ENCODE measurements at regions of chr5 and their contacts with region 1.

Region 1: DNA sequence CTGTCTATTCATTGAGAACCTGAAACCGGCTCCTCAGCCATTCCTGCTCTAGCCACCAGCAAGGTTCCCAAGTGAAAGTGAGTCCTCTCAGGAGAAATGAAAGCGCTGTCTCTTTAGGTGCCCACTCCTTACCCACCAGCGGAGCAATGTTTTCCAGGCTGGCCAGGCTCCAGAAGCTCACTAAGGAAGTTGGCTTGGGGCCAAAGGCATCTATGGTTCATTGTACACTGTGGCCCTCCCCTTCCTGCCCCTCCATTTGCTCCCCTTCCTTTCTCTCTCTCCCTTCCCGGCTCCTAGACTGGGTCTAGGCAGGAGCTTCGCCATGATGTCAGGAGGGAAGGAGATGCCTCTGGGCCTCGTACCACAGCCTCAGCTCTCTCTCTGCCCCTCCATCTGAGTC is 1.1 kb upstream of the GABRP start:
- DNase-seq: no peak
- ATAC-seq: no peak
- H3K4me3 ChIP-seq: no peak overlapping the region
- H3K27ac ChIP-seq: no peak overlapping the region
- H3K4me1 ChIP-seq: no peaks in the 10 kb centered on the region
- H3K27me3 ChIP-seq: no peaks in the 10 kb centered on the region
- CTCF ChIP-seq: no peak

Region 2: GRCh38 chr5:170638454-170639220 is 143.8 kb before region 1 on chr5:
- intact Hi-C with region 1: loop called in 1 of 2 experiments (anchors 10 kb)
- DNase-seq: peak; percentile 43 to 64
- ATAC-seq: peak in 1 of 4 donors; percentile 43
- H3K4me3 ChIP-seq: no peak overlapping the region
- H3K27ac ChIP-seq: no peak overlapping the region
- H3K4me1 ChIP-seq: no peaks in the 10 kb centered on the region
- H3K27me3 ChIP-seq: peaks cover 0 to 4% (median 0%) of the 10 kb centered on the region in 3 donors
- CTCF ChIP-seq: peak; percentile 68